ENCODE measurements at regions of chr22 and their contacts with region 1.

Region 1: GRCh38 chr22:40436505-40437451 is 66.4 kb downstream of the SGSM3 start:
- DNase-seq: peak in 4 of 5 donors; percentile 39 to 63 (median 56)
- H3K4me3 ChIP-seq: peak overlapping the region; percentile 27
- H3K27ac ChIP-seq: peak overlapping the region; percentile 27 to 82
- H3K4me1 ChIP-seq: peaks cover 2% of the 10 kb centered on the region
- H3K27me3 ChIP-seq: no peaks in the 10 kb centered on the region
- CTCF ChIP-seq: peak; percentile 66 to 93 (median 85)
- EP300 ChIP-seq: no peak
- POLR2A ChIP-seq: no peak

Region 2: DNA sequence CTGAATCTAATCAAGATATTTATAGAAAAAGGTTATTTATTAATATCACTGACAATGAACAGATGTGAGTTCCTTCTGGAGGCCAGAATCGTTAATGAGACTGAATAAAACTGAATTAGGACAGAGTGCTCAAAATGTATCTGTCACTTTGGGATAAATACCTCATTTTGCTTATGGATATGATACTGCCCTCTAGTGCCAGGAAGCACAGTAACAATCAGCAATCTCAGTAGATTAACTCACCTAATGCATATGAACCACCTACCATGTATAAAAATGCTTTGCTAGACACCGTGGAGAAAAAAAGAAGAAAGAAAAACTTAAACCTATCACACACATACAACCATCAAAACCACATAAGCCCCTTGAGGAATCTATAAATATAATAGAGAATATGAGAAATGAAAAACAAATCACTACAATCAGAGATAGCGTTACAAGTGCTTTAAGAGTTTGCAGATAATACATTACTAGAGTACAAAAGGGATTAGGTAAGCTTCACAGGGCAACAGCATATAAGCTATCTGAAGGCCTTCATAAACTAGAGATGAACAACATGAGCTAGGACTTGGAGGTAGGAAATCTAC is 51.0 kb after region 1 on chr22:
- intact Hi-C with region 1: loop called in 1 of 4 experiments (anchors 10 kb)
- DNase-seq: no peak
- H3K4me3 ChIP-seq: no peak overlapping the region
- H3K27ac ChIP-seq: no peak overlapping the region
- H3K4me1 ChIP-seq: peaks cover 11% of the 10 kb centered on the region
- H3K27me3 ChIP-seq: no peaks in the 10 kb centered on the region
- CTCF ChIP-seq: peak; percentile 8 to 59 (median 26)
- EP300 ChIP-seq: no peak
- POLR2A ChIP-seq: no peak

Region 3: DNA sequence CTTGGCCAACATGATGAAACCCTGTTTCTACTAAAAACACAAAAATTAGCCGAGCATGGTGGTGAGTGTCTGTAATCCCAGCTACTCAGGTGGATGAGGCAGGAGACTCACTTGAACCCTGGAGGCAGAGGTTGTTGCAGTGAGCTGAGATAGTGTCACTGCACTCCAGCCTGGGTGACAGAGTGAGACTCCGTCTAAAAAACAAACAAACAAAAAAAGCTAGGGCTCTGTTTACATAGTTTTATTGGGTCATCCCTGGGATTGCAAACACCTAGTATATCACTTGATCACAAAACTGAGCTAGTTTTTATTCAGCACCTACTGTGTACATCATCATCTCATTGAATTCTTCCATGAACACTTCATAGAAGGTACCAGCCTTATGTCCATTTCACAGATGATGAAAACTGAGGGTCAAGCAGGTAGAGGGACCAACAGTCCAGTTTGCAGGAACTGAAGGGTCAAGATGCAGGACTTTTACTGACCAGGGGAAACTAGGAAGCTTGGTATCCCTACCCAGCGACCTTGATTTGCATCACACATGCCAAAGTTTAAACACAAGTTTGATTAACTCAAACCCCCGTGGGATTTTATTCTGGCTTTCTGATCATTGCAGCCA is 208.9 kb after region 1 on chr22:
- intact Hi-C with region 1: loop called (anchors 2 to 5 kb)
- DNase-seq: peak in 1 of 5 donors; percentile 7
- H3K4me3 ChIP-seq: no peak overlapping the region
- H3K27ac ChIP-seq: no peak overlapping the region
- H3K4me1 ChIP-seq: peaks cover 2% of the 10 kb centered on the region
- H3K27me3 ChIP-seq: no peaks in the 10 kb centered on the region
- CTCF ChIP-seq: no peak
- EP300 ChIP-seq: no peak
- POLR2A ChIP-seq: no peak

Region 4: DNA sequence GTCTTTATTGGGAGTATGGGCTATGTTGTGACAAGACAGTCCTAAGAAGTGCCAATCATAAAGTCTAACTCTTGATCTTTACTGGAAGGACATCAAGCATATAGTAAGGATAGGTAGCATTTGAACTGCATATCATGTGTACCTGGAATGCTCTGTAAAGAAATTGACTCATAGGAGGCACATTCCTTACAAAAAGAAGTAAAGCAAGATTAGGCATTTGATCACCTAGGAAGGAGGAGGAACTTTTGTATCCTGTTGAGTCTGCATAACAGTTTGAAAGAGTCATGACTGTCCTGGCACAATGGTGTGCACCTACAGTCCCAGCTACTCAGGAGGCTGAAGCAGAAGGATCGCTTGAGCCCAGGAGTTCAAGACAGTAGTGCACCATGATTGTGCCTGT is 467.3 kb after region 1 on chr22:
- intact Hi-C with region 1: loop called in 1 of 4 experiments (anchors 10 kb)
- DNase-seq: no peak
- H3K4me3 ChIP-seq: no peak overlapping the region
- H3K27ac ChIP-seq: no peak overlapping the region
- H3K4me1 ChIP-seq: no peaks in the 10 kb centered on the region
- H3K27me3 ChIP-seq: no peaks in the 10 kb centered on the region
- CTCF ChIP-seq: no peak
- EP300 ChIP-seq: no peak
- POLR2A ChIP-seq: no peak

Measured in ovary (tissue), 10 donors.